AG04450 (cell line): ENCODE measurements at regions of chr11 and their contacts with region 1.

Region 1: GRCh38 chr11:5291207-5291838 is 10.4 kb downstream of the OR51B4 start:
- DNase-seq: no peak
- H3K4me3 ChIP-seq: no peak overlapping the region
- H3K27ac ChIP-seq: no peak overlapping the region
- H3K27me3 ChIP-seq: no peaks in the 10 kb centered on the region
- CTCF ChIP-seq: peak; percentile 73

Region 2: DNA sequence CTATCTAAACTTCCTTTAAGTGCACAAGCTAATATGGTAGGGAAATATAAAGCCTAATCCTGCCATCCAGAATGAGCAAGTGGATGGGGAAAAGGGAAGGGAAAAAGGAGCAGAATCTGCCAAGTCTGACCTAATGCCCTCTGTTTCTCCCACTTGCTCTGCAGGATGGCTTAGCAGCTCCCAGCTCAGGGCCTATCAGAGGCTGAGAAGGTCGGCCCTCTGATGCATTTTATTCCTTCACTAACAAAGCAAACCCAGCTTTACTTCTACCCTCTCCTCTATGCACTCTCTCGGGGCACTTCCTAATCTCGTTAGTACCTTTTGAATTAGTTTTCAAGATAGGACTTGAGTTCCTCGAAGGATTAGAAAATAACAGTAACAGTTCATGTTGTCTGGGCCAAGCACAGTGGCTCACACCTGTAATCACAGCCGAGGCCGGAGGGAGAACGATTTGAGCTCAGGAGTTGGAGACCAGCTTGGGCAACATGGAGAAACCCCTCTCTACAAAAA is 80.9 kb before region 1 on chr11:
- CTCF ChIA-PET with region 1: interaction called, 13 read pairs
- POLR2A ChIA-PET with region 1: no interaction called
- DNase-seq: no peak
- H3K4me3 ChIP-seq: no peak overlapping the region
- H3K27ac ChIP-seq: no peak overlapping the region
- H3K27me3 ChIP-seq: no peaks in the 10 kb centered on the region
- CTCF ChIP-seq: no peak